Ovary (tissue), 10 donors: ENCODE measurements at regions of chr4 and their contacts with region 1.

Region 1: GRCh38 chr4:53490965-53491622 is 100.2 kb downstream of the LNX1 start:
- DNase-seq: peak in 3 of 5 donors; percentile 46 to 79 (median 50)
- H3K4me3 ChIP-seq: no peak overlapping the region
- H3K27ac ChIP-seq: no peak overlapping the region
- H3K4me1 ChIP-seq: peaks cover 6% of the 10 kb centered on the region
- H3K27me3 ChIP-seq: no peaks in the 10 kb centered on the region
- CTCF ChIP-seq: peak; percentile 17 to 82 (median 52)
- EP300 ChIP-seq: no peak
- POLR2A ChIP-seq: no peak

Region 2: DNA sequence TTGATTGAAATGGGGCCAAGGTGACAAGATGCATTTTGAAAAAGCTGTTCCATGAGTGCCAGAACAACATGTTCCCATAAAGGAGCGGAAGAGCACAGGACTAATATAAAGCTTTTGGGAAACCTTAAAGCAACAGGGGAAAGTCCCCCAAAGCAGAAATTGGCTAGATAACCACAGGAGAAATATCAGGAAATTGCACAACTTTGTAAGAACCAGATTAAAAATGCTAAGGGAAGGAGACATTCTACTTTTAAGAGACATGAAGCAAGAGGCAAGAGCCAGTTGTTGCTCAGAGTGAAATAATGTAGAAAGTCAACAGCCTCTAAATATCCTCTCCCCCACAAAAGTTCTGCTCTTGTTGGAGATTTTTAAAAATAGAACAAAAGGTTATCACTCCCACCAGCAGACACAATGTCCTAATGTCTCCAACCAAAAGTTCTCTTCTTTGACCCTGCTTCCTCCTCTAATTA is 185.3 kb after region 1 on chr4:
- intact Hi-C with region 1: loop called in 1 of 4 experiments (anchors 10 kb)
- DNase-seq: peak in 1 of 5 donors; percentile 45
- H3K4me3 ChIP-seq: no peak overlapping the region
- H3K27ac ChIP-seq: no peak overlapping the region
- H3K4me1 ChIP-seq: peaks cover 6% of the 10 kb centered on the region
- H3K27me3 ChIP-seq: no peaks in the 10 kb centered on the region
- CTCF ChIP-seq: no peak
- EP300 ChIP-seq: peak; percentile 61
- POLR2A ChIP-seq: no peak

Region 3: DNA sequence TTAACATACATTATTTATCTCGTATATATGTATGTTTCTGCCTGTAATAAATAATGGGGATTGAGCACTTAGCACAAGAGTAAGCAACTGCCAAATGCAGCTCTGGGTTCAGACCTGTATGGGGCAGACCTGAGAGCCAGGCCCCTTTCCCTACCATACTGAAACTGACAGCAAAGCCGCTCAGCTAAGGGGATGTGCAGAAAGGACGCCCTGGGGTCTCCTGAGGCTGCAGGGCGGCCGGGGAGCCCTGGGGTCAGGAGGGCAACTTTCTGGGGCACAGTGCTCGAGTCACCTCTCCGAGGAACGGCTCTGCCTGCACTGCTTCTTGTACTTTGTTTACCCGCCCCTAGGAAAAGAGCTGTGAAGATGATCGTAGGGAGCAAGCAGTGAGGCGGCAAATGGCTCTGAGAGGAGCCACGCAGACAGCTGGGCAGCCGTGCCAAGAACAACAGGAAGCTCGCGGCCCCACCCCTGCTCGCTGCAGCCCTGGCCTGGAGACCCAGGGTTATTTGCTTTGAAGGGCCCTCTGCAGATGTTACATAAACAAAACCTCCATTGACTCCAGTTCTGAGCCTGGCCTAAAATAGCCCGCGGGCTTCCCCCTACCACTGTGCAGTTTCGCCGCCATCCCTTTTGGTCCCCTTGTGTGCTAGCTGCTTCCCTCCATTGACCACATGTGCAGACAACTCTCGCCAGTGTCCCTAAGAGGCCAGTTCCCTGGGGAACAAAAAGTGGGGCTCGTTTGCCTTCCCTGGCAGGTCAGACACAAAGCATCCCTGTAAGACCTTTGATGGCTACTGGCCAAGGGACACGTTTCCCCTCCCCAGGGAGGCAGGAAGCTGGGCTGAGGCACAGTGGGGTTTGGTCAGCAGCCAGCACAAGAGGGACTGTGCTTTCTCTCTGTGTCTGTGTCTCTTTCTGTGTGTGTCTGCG is 211.5 kb after region 1 on chr4:
- intact Hi-C with region 1: loop called in 1 of 4 experiments (anchors 10 kb)
- DNase-seq: peak; percentile 81 to 90 (median 87)
- H3K4me3 ChIP-seq: no peak overlapping the region
- H3K27ac ChIP-seq: peak overlapping the region in 1 of 2 donors; percentile 52
- H3K4me1 ChIP-seq: peaks cover 8% of the 10 kb centered on the region
- H3K27me3 ChIP-seq: no peaks in the 10 kb centered on the region
- CTCF ChIP-seq: no peak
- EP300 ChIP-seq: no peak
- POLR2A ChIP-seq: no peak

Region 4: DNA sequence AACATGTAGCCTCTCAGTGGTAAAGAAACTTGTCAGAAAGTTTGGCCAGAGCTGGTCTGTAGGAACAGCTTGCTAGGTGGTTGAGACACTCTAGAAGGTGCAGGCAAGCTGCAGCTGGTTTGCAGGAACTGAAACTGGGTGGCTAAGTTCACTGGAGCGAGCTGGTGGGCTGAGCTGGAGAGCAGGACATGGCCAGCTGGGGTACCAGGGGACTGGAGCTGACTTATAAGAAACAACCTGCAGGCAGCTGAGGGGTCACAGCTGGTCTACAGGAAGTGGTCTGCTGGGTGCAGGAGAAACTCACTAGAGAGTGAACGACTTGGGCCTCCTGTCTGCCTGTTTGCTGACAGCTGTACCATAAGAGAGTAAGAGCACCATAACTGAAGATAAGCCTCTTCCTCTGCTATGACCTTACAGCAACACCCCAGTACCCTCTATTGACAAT is 257.3 kb after region 1 on chr4:
- intact Hi-C with region 1: no loop called
- DNase-seq: no peak
- H3K4me3 ChIP-seq: no peak overlapping the region
- H3K27ac ChIP-seq: no peak overlapping the region
- H3K4me1 ChIP-seq: peaks cover 6% of the 10 kb centered on the region
- H3K27me3 ChIP-seq: no peaks in the 10 kb centered on the region
- CTCF ChIP-seq: no peak
- EP300 ChIP-seq: no peak
- POLR2A ChIP-seq: no peak